ENCODE measurements at regions of chr1 and their contacts with region 1.

Region 1: GRCh38 chr1:28648474-28649198 is at the start of gene RNU11:
- DNase-seq: peak; percentile 98
- ATAC-seq: peak; percentile 80
- H3K4me3 ChIP-seq: peak within 1 kb of the TSS; percentile 48
- H3K27ac ChIP-seq: peak within 1 kb of the TSS; percentile 93
- H3K4me1 ChIP-seq: peaks cover 17% of the 10 kb centered on the region
- H3K27me3 ChIP-seq: no peaks in the 10 kb centered on the region
- CTCF ChIP-seq: no peak
- total RNA-seq, gene RNU11: not detected in 2 replicates

Region 2: DNA sequence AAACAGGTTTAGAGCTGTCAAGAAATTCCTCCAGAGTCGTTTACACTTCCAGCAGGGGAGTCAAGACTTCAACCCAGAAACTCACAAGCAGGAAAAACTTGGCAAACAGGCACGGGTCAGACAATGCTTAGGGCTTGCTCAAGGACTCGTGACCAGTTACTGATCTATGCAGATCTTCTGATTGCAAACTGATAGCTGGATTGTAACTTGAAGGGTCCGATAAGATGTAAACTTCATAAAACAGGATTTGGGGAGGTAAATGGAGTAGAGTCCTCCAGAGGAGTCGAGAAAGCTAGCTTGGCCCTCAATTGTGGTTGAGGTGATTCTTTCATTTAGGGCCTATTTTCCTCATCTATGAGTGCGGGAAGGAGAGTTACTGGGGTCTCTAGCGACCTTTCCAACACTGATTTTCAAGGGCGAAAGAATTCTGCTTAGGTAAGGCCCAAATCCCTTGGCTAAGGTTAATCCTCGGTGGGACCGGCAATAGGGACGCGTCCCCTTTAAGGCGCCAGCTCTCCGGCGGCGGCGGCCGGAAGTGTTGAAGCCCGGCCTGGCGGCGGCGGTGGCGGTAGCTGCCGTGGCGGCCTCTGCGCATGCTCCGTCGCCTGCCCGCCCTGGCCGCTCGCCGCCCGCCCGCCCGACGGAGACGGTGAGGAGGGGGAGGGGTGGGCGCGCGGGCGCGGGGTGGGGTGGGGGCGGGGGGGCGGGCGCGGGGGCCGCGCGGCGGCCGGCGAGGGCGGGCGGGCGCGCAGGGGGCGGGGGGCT is 19.7 kb after region 1 on chr1 and contains the start of gene GMEB1:
- CTCF ChIA-PET with region 1: no interaction called
- POLR2A ChIA-PET with region 1: interaction called, 6 read pairs
- intact Hi-C with region 1: loop called (anchors 2 kb)
- DNase-seq: peak; percentile 87
- ATAC-seq: peak; percentile 84
- H3K4me3 ChIP-seq: peak within 1 kb of the TSS; percentile 83
- H3K27ac ChIP-seq: peak within 1 kb of the TSS; percentile 68
- H3K4me1 ChIP-seq: peaks cover 10% of the 10 kb centered on the region; the same call in 1 of the 2 replicates
- H3K27me3 ChIP-seq: no peaks in the 10 kb centered on the region
- CTCF ChIP-seq: no peak
- total RNA-seq, gene GMEB1: 5.2 and 10.8 TPM in 2 replicates

Region 3: GRCh38 chr1:28751315-28752060 is 102.9 kb after region 1 on chr1:
- CTCF ChIA-PET with region 1: no interaction called
- POLR2A ChIA-PET with region 1: interaction called, 12 read pairs
- intact Hi-C with region 1: no loop called
- DNase-seq: peak; percentile 75
- ATAC-seq: peak; percentile 58
- H3K4me3 ChIP-seq: 0 out of 2 replicates have a peak overlapping the region, but pooled peaks have one; percentile 19
- H3K27ac ChIP-seq: peak overlapping the region; percentile 36
- H3K4me1 ChIP-seq: peaks cover 35% of the 10 kb centered on the region
- H3K27me3 ChIP-seq: no peaks in the 10 kb centered on the region
- CTCF ChIP-seq: no peak

Measured in PC-3 (cell line).